ENCODE measurements at regions of chr11 and their contacts with region 1.

Region 1: GRCh38 chr11:95231127-95231880 is at the start of gene SESN3:
- DNase-seq: peak; percentile 96
- H3K4me3 Mint-ChIP-seq: no peak within 1 kb of the TSS
- H3K27ac Mint-ChIP-seq: peak within 1 kb of the TSS; percentile 45
- H3K4me1 Mint-ChIP-seq: no peaks in the 10 kb centered on the region
- H3K27me3 Mint-ChIP-seq: no peaks in the 10 kb centered on the region
- CTCF ChIP-seq: no peak
- total RNA-seq, gene SESN3: 5.6 and 6.0 TPM in 2 replicates

Region 2: DNA sequence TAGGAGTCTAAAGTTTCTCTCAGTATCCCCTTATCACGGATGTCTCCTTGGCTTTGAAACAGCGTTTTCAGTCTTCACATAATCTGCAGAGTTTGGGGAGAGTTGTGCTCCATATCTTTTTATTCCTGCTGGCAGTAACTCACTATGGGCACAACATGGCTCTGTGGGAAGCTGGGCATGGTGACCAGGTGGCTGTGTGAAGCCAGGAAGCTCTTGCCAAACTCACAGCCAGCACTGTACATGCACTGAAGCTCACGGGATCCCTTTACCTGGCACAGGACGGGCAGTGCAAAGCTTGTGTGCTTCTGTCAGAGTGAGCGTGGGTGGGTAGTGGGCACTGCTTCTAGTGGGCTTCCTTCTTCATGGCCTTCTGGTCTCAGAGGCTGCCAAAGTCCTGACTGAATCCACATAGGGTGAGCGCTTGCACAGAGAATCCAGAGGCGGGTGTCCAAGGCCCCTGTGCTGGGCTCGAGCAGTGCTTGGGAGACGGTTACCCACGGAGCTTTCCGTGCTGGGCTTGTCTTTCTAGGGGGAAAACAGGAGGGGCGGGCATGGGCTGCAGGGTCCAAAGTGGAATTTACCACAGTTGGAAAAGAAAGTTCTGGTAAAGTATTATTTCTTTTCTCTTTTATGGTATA is 217.0 kb before region 1 on chr11:
- CTCF ChIA-PET with region 1: no interaction called
- intact Hi-C with region 1: no loop called
- DNase-seq: no peak
- H3K4me3 Mint-ChIP-seq: no peak overlapping the region
- H3K27ac Mint-ChIP-seq: no peak overlapping the region
- H3K4me1 Mint-ChIP-seq: no peaks in the 10 kb centered on the region
- H3K27me3 Mint-ChIP-seq: no peaks in the 10 kb centered on the region
- CTCF ChIP-seq: no peak

Region 3: GRCh38 chr11:95453616-95454171 is 222.4 kb after region 1 on chr11:
- CTCF ChIA-PET with region 1: interaction called, 3 read pairs
- intact Hi-C with region 1: loop called (anchors 10 kb)
- DNase-seq: peak; percentile 86
- H3K4me3 Mint-ChIP-seq: peak overlapping the region; percentile 0
- H3K27ac Mint-ChIP-seq: peak overlapping the region; percentile 38
- H3K4me1 Mint-ChIP-seq: peaks cover 26% of the 10 kb centered on the region
- H3K27me3 Mint-ChIP-seq: no peaks in the 10 kb centered on the region
- CTCF ChIP-seq: no peak

Region 4: DNA sequence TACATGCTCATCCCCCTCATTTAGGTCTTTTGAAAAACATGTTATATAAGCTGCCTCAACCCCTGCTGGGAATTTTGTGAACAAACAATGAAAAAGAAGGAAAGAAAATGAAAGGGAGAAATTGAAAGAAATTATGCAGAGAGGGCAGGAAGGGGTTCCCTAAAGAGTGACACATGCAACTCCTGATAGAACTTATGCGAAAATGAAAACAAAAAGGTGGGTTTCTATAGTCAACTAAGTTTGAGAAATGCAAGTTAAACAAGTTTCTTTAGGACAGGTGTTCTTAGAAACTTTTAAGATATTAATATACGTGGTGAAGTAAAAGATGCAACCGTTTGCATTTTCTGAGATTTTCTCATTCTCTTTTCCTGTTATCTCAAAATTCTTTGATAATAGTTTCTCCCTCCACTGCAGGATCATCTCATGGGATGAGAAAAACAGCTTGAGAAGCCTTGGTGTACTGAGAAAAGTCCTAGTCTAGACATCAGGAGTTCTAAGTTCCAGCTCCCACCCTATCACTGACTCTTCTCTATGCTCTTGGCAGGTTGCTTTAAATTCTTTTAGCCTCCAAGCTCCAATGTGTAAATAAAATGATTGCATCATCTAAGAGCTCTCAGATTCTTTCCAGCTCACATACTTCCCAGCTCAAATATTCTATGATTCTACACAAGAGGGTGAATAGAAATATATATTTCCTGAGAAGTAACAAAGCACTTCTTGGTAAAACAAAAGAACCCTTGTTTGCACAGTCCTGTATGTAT is 449.0 kb after region 1 on chr11:
- CTCF ChIA-PET with region 1: no interaction called
- intact Hi-C with region 1: loop called (anchors 10 kb)
- DNase-seq: no peak
- H3K4me3 Mint-ChIP-seq: no peak overlapping the region
- H3K27ac Mint-ChIP-seq: peak overlapping the region; percentile 80
- H3K4me1 Mint-ChIP-seq: peaks cover 29% of the 10 kb centered on the region
- H3K27me3 Mint-ChIP-seq: no peaks in the 10 kb centered on the region
- CTCF ChIP-seq: no peak

Region 5: DNA sequence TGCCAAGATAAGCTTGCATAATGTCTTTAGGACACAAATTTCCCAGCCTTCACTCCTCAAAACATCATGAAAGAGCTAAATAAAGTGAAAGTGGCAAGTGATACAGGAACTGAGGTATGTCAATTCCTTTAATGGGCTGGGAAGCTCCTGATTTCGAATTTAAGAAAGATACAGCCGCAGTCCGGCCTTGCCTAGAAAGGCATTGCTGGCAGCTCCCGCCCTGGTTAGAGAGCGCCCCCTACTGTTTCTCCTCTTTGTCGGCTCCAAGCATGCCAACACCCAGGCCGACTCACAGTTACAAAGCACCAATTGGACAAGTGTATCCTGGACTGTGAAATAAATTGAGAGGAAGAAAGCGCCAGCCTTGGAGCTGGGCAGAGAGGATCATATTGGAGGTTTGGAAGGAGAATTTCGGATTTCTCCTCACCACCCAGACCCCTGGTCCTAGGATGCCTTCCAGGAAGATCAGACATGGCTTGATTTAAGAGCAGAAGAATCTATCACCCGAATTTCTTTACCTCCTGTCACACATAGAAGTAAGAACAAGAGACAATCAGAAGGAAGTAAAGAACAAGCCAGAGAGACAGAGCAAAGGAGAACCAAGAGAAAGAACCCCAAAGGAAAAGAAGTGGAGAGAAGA is 474.3 kb after region 1 on chr11:
- CTCF ChIA-PET with region 1: interaction called, 5 read pairs
- intact Hi-C with region 1: loop called (anchors 2 kb)
- DNase-seq: peak; percentile 84
- H3K4me3 Mint-ChIP-seq: no peak overlapping the region
- H3K27ac Mint-ChIP-seq: no peak overlapping the region
- H3K4me1 Mint-ChIP-seq: peaks cover under 1% of the 10 kb centered on the region
- H3K27me3 Mint-ChIP-seq: no peaks in the 10 kb centered on the region
- CTCF ChIP-seq: peak; percentile 65